Calu3 (cell line): ENCODE measurements at regions of chr4 and their contacts with region 1.

Region 1: DNA sequence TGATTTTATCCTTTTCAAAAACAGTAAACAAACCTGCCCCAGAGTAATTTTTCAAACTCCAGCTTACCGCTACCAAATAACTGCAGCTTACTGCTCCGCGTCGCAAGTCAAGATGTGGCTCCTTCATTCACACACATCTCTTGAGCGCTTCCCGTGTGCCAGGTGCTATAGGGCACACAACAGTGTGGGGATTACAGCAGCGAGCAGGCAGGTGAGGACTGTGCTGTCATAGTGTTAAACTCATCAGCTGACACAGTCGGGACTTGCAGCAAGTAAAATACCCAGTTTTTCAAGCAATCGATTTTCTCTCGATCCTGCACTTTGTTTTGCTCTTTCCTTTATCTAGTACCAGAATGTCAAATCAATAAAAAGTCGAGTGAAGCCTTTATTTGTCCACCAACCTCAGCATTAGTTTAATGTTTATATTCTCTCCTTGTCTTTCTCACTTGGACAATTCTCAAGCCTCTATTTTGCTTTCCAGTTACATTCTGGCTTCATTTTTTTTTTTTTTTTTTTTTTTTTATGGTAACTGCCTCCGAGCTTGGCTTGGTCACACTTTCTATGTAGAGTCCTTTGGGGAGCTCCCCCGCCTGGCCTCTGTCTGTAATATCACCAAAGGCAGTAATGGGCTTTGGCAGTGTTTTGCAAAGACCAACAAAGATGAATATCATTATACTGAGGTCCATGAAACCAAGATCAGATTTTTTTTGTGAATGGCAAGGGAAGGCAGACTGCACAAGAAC is 8.3 kb upstream of the ASB5 start:
- DNase-seq: peak; percentile 58
- H3K4me3 Mint-ChIP-seq: peak overlapping the region; percentile 65
- H3K27ac Mint-ChIP-seq: no peak overlapping the region
- H3K4me1 Mint-ChIP-seq: no peaks in the 10 kb centered on the region
- H3K27me3 Mint-ChIP-seq: no peaks in the 10 kb centered on the region
- CTCF ChIP-seq: no peak

Region 2: GRCh38 chr4:174604198-174604597 is 1673.1 kb before region 1 on chr4:
- CTCF ChIA-PET with region 1: no interaction called
- intact Hi-C with region 1: loop called (anchors 10 kb)
- DNase-seq: no peak
- H3K4me3 Mint-ChIP-seq: no peak overlapping the region
- H3K27ac Mint-ChIP-seq: no peak overlapping the region
- H3K4me1 Mint-ChIP-seq: no peaks in the 10 kb centered on the region
- H3K27me3 Mint-ChIP-seq: no peaks in the 10 kb centered on the region
- CTCF ChIP-seq: no peak

Region 3: GRCh38 chr4:176034499-176034898 is 242.8 kb before region 1 on chr4:
- CTCF ChIA-PET with region 1: no interaction called
- intact Hi-C with region 1: loop called (anchors 5 kb)
- DNase-seq: peak; percentile 35
- H3K4me3 Mint-ChIP-seq: no peak overlapping the region
- H3K27ac Mint-ChIP-seq: no peak overlapping the region
- H3K4me1 Mint-ChIP-seq: no peaks in the 10 kb centered on the region
- H3K27me3 Mint-ChIP-seq: no peaks in the 10 kb centered on the region
- CTCF ChIP-seq: no peak

Region 4: DNA sequence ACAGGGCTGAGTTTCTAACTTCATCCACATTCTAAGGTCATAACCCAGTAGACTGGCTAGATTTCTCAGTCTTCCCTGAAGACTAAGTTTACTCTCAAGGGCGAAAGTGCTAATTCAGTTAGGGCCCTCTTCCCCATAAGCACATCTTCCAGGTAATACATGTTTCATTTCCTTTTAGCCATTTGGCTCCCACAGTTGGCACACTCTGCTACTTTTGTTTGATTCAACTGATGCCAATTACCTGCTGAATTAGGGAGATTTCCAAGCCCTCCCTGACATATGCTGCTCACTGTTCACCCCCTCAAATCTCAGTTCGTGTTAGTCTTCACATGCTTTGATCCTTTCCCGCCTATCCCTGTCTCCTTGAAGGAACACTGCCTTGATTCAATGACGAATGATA is 228.7 kb before region 1 on chr4:
- CTCF ChIA-PET with region 1: interaction called, 14 read pairs
- intact Hi-C with region 1: no loop called
- DNase-seq: no peak
- H3K4me3 Mint-ChIP-seq: no peak overlapping the region
- H3K27ac Mint-ChIP-seq: no peak overlapping the region
- H3K4me1 Mint-ChIP-seq: no peaks in the 10 kb centered on the region
- H3K27me3 Mint-ChIP-seq: no peaks in the 10 kb centered on the region
- CTCF ChIP-seq: no peak

Region 5: DNA sequence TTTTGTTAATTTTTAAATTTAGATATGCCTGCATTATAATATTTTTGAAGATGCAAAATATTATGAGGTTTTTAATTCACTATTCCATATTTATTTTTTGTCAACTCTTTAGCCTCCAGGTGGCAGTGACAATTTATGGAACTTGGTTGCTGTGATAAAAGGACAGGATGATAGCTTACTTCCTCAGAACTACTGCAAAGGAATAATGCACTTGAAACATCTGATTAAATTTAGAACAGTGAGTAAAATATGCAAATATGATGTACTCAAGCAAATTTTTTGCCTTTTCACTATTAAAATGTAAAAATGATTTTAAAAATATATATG is 127.0 kb before region 1 on chr4:
- CTCF ChIA-PET with region 1: interaction called, 4 read pairs
- intact Hi-C with region 1: loop called (anchors 1 kb)
- DNase-seq: no peak
- H3K4me3 Mint-ChIP-seq: no peak overlapping the region
- H3K27ac Mint-ChIP-seq: no peak overlapping the region
- H3K4me1 Mint-ChIP-seq: no peaks in the 10 kb centered on the region
- H3K27me3 Mint-ChIP-seq: no peaks in the 10 kb centered on the region
- CTCF ChIP-seq: no peak

Region 6: DNA sequence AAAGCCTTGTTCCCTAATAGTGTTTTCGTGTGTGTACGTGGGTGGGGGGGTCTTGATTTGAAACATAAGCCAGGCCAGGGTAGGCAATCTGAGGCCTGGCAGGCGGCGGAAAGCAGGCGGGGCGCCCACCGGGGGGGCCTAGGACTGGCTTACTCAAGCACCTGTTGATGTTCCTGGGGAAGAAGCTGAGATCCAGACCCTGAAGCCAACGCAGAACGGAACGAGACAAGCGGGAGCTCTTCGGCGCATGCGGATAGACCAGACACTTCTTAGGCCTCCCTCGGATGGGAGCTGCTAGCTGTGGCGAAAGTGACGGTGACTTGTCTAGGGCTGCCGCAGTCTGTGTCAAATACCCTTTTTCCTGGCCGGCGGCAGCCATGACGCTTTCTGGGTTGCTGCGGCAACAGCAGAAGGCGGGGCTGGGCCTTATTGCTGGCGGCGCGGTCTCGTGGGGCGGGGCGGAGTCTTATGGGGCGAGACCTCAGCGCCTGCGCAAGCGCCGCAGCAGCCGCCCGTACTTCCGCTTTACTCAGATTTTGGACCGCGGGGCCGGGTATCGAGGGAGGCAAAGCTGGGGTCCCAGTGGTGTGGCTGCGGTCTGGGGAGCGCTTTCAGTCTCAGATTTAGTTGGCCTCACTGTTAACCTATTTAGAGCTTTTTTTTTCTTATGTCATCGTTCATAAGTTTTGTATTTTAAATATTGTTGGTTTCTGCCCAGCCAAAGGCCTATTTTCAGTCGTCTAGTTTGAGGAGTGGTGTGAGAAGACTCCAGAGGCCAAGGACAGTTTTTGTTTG is 82.0 kb before region 1 on chr4 and contains the start of gene SPATA4:
- CTCF ChIA-PET with region 1: no interaction called
- intact Hi-C with region 1: loop called (anchors 5 kb)
- DNase-seq: peak; percentile 90
- H3K4me3 Mint-ChIP-seq: peak within 1 kb of the TSS; percentile 80
- H3K27ac Mint-ChIP-seq: peak within 1 kb of the TSS; percentile 91
- H3K4me1 Mint-ChIP-seq: peaks cover 14% of the 10 kb centered on the region
- H3K27me3 Mint-ChIP-seq: peaks cover 7% of the 10 kb centered on the region
- CTCF ChIP-seq: no peak
- total RNA-seq, gene SPATA4: not detected in 2 replicates